ENCODE measurements at regions of chr17 and their contacts with region 1.

Region 1: GRCh38 chr17:3879186-3879585 is 13.7 kb downstream of the CAMKK1 start:
- DNase-seq: peak; percentile 59
- ATAC-seq: peak; percentile 79

Region 2: GRCh38 chr17:3990386-3991127 is 111.4 kb after region 1 on chr17:
- intact Hi-C with region 1: loop called (anchors 10 kb)
- DNase-seq: peak; percentile 6
- ATAC-seq: no peak